GM23248 (cell line): ENCODE measurements at regions of chr1 and their contacts with region 1.

Region 1: DNA sequence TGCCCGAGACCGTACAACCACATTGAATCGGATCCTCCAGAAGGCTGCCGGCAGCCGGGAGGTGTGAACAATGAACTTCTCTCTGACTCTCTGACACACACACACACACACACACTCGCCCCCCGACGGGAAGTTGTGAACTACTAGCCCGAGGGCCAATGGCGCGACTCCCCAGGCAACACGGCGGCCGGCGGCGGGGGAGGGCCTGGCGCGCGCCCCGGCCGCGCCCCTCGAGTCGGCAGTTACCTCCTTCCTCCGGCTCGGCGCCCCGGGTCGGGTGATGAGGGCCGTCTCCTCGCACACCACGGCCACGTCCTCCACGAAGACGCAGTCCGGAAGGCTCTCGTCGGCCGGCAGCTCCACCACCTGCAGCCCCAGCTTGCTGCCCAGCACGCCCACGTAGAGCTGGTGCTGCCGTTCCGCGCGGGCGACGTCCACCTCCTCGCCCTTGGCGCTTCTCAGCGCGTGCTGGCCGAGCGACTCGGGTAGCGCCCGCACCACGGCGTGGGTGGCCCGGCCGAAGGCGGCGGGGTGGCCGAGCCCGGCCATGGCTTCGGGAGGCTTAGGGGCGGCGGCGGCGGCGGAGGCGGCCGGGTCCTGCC is 361 bp downstream of the DDAH1 start:
- DNase-seq: peak; percentile 90
- H3K4me3 ChIP-seq: peak overlapping the region; percentile 83
- H3K27ac ChIP-seq: peak overlapping the region; percentile 83
- H3K4me1 ChIP-seq: peaks cover 47% of the 10 kb centered on the region
- H3K27me3 ChIP-seq: no peaks in the 10 kb centered on the region

Region 2: GRCh38 chr1:84598846-84599741 is 865.5 kb before region 1 on chr1:
- in situ Hi-C with region 1: no loop called
- DNase-seq: peak; percentile 87
- H3K4me3 ChIP-seq: peak overlapping the region; percentile 56
- H3K27ac ChIP-seq: peak overlapping the region; percentile 53
- H3K4me1 ChIP-seq: peaks cover 42% of the 10 kb centered on the region
- H3K27me3 ChIP-seq: no peaks in the 10 kb centered on the region

Region 3: GRCh38 chr1:85313888-85314696 is 150.5 kb before region 1 on chr1:
- in situ Hi-C with region 1: loop called (anchors 10 kb)
- DNase-seq: peak; percentile 94
- H3K4me3 ChIP-seq: no peak overlapping the region
- H3K27ac ChIP-seq: peak overlapping the region; percentile 99
- H3K4me1 ChIP-seq: peaks cover 81% of the 10 kb centered on the region
- H3K27me3 ChIP-seq: no peaks in the 10 kb centered on the region

Region 4: GRCh38 chr1:85865213-85865612 is 400.6 kb after region 1 on chr1:
- in situ Hi-C with region 1: no loop called
- DNase-seq: peak; percentile 38
- H3K4me3 ChIP-seq: no peak overlapping the region
- H3K27ac ChIP-seq: no peak overlapping the region
- H3K4me1 ChIP-seq: peaks cover 10% of the 10 kb centered on the region
- H3K27me3 ChIP-seq: no peaks in the 10 kb centered on the region